ENCODE measurements at regions of chr7 and their contacts with region 1.

Region 1: DNA sequence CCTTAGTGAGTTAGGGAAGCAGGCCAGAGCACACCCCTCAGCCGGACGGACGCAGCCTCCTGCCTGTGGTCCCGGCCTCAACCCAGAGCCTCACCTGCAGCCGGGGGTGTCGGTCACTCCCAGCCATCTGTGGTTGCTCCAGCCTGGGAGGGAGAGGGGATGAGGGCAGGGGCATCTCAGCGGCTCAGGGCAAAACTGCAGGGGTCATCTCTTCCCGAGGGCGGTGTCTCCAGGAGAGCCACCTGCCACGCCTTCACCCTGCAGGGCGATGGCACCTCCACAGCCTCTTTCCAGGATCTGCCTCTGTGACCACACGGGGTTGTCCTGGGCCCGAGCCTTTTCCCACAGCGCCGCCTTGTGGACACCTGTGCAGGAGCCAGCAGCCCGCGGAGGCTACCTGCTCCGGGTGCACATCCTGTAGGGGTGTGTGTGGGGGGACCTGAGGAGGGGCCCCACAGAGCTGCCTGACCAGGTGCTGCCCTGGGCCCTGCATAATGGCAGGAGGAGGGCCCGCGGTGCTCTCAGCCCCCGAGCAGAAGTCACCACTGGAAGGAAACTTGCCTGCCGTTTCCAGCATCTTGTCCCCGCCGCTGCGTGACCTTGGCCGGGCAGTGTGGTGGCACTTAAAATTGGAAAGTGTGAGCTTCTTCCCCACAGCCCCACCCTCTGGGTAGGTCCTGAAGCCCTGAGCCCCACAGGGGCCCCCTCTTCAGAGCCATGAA is 21.6 kb upstream of the AP5Z1 start:
- DNase-seq: peak; percentile 62 to 72 (median 65)
- H3K4me3 ChIP-seq: no peak overlapping the region
- H3K4me3 Mint-ChIP-seq: no peak overlapping the region
- H3K27ac ChIP-seq: no peak overlapping the region
- H3K27ac Mint-ChIP-seq: peak overlapping the region in 1 of 7 donors; percentile 63
- H3K4me1 ChIP-seq: no peaks in the 10 kb centered on the region
- H3K4me1 Mint-ChIP-seq: peaks cover 5% of the 10 kb centered on the region
- H3K27me3 ChIP-seq: no peaks in the 10 kb centered on the region
- H3K27me3 Mint-ChIP-seq: peaks cover 0 to 1% (median 0%) of the 10 kb centered on the region in 3 donors
- CTCF ChIP-seq: peak; percentile 96

Region 2: DNA sequence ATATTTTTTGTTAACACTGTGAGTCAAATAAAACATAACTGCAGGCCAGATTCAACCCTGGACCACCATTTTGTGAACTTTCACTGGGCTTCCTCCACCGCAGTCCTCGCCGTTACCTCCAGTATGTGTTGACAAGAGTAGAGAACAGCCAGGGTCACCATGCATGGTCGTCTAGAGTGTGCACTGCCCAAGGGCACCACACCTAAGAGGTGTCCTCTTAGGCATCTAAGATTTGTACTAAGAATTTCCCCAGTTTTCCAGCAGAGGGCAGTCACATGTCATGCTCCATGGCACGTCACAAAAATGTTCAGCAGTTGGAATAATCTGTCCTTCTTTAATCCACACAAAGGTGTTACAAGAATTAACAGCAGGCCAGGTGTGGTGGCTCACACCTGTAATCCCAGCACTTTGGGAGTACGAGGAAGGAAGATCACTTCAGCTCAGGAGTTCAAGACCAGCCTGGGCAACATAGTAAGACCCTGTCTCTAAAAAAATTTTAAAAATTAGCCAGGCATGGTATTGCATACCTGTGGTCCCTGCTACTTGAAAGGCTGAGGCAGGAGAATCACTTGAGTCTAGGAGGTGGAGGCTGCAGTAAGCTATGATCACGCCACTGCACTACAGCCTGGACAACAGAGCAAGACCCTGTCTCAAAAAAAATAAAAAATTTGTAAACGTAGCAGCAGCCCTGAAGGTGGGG is 143.0 kb before region 1 on chr7:
- intact Hi-C with region 1: loop called (anchors 1 to 10 kb)
- DNase-seq: peak; percentile 49 to 67 (median 60)
- H3K4me3 ChIP-seq: no peak overlapping the region
- H3K4me3 Mint-ChIP-seq: no peak overlapping the region
- H3K27ac ChIP-seq: no peak overlapping the region
- H3K27ac Mint-ChIP-seq: no peak overlapping the region
- H3K4me1 ChIP-seq: peaks cover 19 to 21% of the 10 kb centered on the region in 2 donors
- H3K4me1 Mint-ChIP-seq: peaks cover 20% of the 10 kb centered on the region
- H3K27me3 ChIP-seq: no peaks in the 10 kb centered on the region
- H3K27me3 Mint-ChIP-seq: peaks cover 0 to 7% (median 4%) of the 10 kb centered on the region in 3 donors
- CTCF ChIP-seq: peak; percentile 91